ENCODE measurements at regions of chr7 and their contacts with region 1.

Region 1: GRCh38 chr7:47991741-47992311 is 12.4 kb upstream of the HUS1 start:
- DNase-seq: peak; percentile 96
- ATAC-seq: peak; percentile 98
- H3K4me3 Mint-ChIP-seq: peak overlapping the region; percentile 81
- H3K27ac Mint-ChIP-seq: peak overlapping the region; percentile 92
- H3K4me1 Mint-ChIP-seq: peaks cover 21% of the 10 kb centered on the region
- H3K27me3 Mint-ChIP-seq: no peaks in the 10 kb centered on the region

Region 2: DNA sequence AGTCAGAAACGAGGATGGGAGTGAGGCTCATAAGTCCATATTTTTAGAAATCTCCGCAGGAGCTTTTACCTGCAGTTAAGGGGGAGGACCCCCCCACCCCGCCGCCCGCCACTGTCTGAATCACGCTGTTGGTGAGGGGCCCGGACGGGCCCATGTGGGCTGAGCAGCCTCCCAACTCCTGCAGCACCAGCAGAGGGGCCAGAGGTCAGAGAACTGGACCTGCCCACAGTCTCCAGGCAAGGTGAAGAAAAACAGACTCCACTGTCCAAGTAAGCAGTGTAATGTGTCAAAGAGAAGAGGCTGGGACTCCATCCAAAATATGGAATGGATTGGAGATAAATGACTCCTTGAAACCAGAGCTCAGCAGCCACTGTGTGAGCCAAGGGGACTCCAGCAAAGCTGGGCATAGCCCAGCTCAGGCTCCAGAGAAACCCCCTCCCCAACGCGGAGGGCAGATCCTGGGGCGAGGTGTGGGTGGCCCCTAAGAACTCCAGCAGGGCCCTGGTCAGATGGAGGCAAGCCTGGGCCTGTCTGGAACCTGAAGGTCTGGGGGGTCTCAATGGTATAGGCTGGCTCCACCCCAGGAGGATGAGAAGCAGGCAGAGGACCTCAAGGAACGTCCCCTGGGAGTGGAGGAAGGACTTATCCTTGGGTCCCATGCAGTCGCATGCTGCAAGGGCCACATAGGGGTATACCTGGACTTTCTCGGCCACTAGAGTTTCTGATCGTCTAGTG is 281.5 kb before region 1 on chr7:
- CTCF ChIA-PET with region 1: no interaction called
- DNase-seq: no peak
- ATAC-seq: no peak
- H3K4me3 Mint-ChIP-seq: no peak overlapping the region
- H3K27ac Mint-ChIP-seq: no peak overlapping the region
- H3K4me1 Mint-ChIP-seq: no peaks in the 10 kb centered on the region
- H3K27me3 Mint-ChIP-seq: no peaks in the 10 kb centered on the region

Region 3: DNA sequence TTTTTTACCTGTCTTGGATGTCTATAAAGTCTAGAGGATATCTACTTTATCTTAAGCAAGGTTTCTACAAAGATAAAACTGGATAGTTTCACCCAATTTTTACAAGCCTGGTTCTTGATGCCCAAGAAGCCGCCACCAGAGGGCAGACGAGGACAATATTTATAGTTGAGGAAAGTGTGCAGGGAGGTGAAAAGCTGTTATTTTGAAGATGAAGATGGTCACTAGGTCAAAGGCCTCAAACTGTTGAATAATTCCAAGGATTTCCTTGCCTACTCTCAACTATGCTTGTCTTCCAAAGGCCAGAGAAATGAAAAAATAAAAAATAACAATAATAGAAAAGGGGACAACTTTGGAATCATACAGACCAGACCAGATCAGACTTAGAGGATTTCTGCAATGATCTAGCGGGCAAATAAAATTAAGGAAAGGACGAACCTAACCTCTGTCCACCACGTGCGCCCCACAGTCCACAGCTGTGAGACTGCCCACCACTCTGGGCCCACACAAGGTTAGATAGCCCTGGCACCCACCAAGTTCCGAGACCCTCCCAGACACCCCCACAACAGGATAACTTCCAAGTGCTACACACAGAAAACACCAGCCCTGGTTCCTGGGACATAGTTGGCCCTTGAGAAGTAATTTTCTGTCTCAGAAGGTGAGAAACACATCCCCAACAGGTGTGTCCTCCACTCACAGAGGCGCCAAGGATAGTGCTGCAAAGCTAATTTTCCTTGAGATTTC is 46.4 kb before region 1 on chr7:
- CTCF ChIA-PET with region 1: interaction called, 14 read pairs
- DNase-seq: peak; percentile 82
- ATAC-seq: peak; percentile 83
- H3K4me3 Mint-ChIP-seq: no peak overlapping the region
- H3K27ac Mint-ChIP-seq: no peak overlapping the region
- H3K4me1 Mint-ChIP-seq: peaks cover 7% of the 10 kb centered on the region
- H3K27me3 Mint-ChIP-seq: no peaks in the 10 kb centered on the region

Region 4: DNA sequence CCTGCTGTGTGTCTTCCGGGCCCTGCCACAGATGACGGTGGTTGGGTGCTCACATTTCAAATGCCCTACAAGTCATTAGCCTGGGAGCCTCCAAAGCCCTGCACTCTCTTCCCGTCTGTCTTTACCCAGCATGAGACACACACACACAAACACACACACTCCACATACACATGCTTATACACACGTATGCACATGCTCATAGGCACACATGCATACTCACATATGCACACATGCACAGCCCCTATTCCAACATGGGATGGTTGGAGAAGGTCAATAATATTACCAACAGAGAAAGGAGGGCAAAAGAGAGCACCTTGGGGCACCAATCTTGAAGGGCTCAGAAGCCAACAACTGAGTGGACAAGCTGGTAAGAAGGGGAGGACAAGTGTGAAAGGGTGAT is 18.1 kb after region 1 on chr7:
- CTCF ChIA-PET with region 1: no interaction called
- DNase-seq: no peak
- ATAC-seq: no peak
- H3K4me3 Mint-ChIP-seq: no peak overlapping the region
- H3K27ac Mint-ChIP-seq: no peak overlapping the region
- H3K4me1 Mint-ChIP-seq: no peaks in the 10 kb centered on the region
- H3K27me3 Mint-ChIP-seq: peaks cover 6% of the 10 kb centered on the region

Region 5: GRCh38 chr7:48088559-48089045 is 96.8 kb after region 1 on chr7:
- CTCF ChIA-PET with region 1: interaction called, 17 read pairs
- DNase-seq: no peak
- ATAC-seq: peak; percentile 73
- H3K4me3 Mint-ChIP-seq: peak overlapping the region; percentile 82
- H3K27ac Mint-ChIP-seq: peak overlapping the region; percentile 98
- H3K4me1 Mint-ChIP-seq: peaks cover 71% of the 10 kb centered on the region
- H3K27me3 Mint-ChIP-seq: no peaks in the 10 kb centered on the region

Region 6: GRCh38 chr7:48094751-48095562 is 103.1 kb after region 1 on chr7:
- CTCF ChIA-PET with region 1: interaction called, 14 read pairs
- DNase-seq: no peak
- ATAC-seq: no peak
- H3K4me3 Mint-ChIP-seq: no peak overlapping the region
- H3K27ac Mint-ChIP-seq: peak overlapping the region; percentile 73
- H3K4me1 Mint-ChIP-seq: peaks cover 89% of the 10 kb centered on the region
- H3K27me3 Mint-ChIP-seq: no peaks in the 10 kb centered on the region

Region 7: DNA sequence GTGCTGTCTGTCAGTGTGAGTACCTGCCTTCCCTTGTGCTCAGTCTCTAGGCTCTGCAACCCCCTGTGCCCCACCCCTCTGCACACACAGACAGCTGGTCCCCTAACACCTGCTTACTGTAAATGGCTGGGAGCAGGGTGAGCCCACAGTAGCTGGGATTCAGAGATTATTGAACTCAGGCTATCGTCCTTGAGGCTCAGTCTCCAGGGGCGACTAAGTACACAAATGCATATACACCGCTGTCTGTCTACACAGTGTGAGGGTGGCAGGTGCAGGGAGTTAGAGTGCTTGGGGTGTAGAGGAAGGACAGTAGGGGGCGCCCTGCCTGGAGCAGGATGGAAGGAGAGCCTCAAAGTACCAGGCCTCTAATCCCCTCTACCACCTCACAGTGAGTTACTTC is 110.1 kb after region 1 on chr7:
- CTCF ChIA-PET with region 1: interaction called, 70 read pairs
- DNase-seq: no peak
- ATAC-seq: no peak
- H3K4me3 Mint-ChIP-seq: no peak overlapping the region
- H3K27ac Mint-ChIP-seq: no peak overlapping the region
- H3K4me1 Mint-ChIP-seq: peaks cover 31% of the 10 kb centered on the region
- H3K27me3 Mint-ChIP-seq: no peaks in the 10 kb centered on the region